ENCODE measurements at regions of chr3 and their contacts with region 1.

Region 1: DNA sequence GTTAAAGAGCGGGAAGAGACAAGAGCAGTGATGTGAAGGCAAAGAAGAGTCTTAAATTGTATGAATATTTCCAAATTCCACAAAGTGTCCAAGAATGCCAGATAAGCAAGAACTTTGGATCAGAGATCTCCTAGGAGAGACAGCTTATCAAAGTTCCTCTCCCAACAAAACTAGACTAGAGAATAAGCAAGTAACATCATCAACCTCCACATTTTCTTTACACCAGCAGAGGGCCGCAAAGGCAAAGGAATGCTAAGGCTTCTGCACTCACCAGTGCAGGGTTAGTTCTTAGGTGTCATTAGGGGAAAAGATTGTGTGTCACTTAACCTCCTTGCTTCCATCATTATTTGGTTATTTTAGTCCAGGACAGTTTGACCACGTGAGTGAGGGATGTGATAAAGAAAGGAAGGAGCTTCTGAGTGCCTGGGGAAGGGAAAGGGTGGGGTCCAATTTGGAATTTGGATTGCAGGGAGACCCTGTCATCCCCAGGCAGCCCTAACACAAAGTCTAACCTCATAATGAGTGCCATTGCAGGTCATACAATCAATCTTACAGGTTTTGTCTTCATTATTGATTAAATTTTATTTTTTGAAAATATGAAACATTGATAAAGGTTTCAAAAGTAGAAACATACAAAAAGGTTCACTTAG is 7.5 kb upstream of the CMTM6 start:
- DNase-seq: peak; percentile 65 to 79 (median 71)
- H3K4me3 ChIP-seq: no peak overlapping the region
- H3K4me3 Mint-ChIP-seq: no peak overlapping the region
- H3K27ac ChIP-seq: no peak overlapping the region
- H3K27ac Mint-ChIP-seq: peak overlapping the region in 2 of 7 donors; percentile 32 to 74
- H3K4me1 ChIP-seq: no peaks in the 10 kb centered on the region
- H3K4me1 Mint-ChIP-seq: peaks cover 9% of the 10 kb centered on the region
- H3K27me3 ChIP-seq: no peaks in the 10 kb centered on the region
- H3K27me3 Mint-ChIP-seq: peaks cover 0 to 2% (median 0%) of the 10 kb centered on the region in 3 donors
- CTCF ChIP-seq: peak; percentile 85

Region 2: DNA sequence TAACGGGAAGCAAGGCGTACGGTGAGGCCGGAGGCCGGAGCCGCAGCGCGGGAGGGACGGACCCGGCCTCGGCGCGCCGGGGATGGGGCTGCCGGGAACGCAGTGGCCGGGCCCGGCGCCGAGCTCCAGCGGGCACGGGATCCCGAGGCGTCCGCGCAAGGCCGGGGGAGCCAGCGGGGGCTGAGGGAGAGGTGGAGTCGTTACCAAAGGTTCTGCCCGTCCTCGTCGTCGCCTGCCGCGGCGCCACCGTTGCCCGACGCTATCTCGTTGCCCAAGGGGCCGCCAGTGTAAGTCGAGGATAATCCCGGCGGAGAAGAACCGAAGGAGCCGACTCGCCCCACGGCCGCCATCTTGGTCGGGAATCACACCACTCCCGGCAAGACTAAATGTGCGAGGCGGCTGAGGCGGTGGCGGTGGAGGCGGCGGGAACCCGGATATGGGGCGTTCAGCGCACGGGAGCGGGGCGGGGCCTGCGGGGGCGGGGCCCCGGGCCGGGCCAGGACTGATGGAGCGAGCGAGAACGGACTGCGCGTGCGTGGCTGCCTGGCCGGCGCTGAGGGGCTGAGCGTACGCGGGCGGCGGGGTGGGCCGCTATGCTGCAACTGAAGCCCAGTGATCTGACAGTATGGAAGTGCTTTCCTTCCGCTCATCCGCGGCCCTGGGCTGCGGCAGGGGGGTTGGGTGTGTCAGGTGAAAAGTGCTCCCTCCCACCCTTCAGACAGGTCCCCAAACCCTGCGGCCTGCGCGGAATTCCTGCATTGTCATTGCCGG is 60.4 kb after region 1 on chr3 and contains the start of gene DYNC1LI1:
- intact Hi-C with region 1: loop called (anchors 5 to 10 kb)
- DNase-seq: peak; percentile 81 to 90 (median 88)
- H3K4me3 ChIP-seq: peak within 1 kb of the TSS; percentile 81 to 92 (median 84)
- H3K4me3 Mint-ChIP-seq: peak within 1 kb of the TSS; percentile 92 to 93
- H3K27ac ChIP-seq: peak within 1 kb of the TSS; percentile 91 to 92
- H3K27ac Mint-ChIP-seq: peak within 1 kb of the TSS; percentile 87 to 96 (median 94)
- H3K4me1 ChIP-seq: peaks cover 58 to 62% of the 10 kb centered on the region in 2 donors
- H3K4me1 Mint-ChIP-seq: peaks cover 41% of the 10 kb centered on the region
- H3K27me3 ChIP-seq: no peaks in the 10 kb centered on the region
- H3K27me3 Mint-ChIP-seq: no peaks in the 10 kb centered on the region
- CTCF ChIP-seq: no peak
- polyA plus RNA-seq, gene DYNC1LI1: 23.5 to 50.1 (median 46.8) TPM

Region 3: DNA sequence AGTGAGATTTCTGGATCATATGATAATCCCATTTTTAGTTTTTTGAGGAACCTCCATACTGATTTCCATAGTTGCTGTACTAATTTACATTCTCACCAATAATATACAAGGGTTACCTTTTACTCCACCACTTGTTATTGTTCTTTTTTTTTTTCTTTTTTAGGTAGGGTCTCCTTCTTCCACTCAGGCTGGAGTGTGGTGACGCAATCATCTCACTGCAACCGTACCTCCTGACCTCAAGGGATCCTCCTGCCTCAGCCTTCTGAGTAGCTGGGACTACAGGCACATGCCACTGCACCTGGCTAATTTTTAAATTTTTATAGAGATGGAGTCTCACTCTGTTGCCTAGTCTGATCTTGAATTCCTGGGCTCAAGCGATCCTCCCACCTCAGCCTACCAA is 150.4 kb after region 1 on chr3:
- intact Hi-C with region 1: loop called (anchors 2 kb)
- DNase-seq: no peak
- H3K4me3 ChIP-seq: no peak overlapping the region
- H3K4me3 Mint-ChIP-seq: no peak overlapping the region
- H3K27ac ChIP-seq: no peak overlapping the region
- H3K27ac Mint-ChIP-seq: peak overlapping the region in 1 of 7 donors; percentile 41
- H3K4me1 ChIP-seq: no peaks in the 10 kb centered on the region
- H3K4me1 Mint-ChIP-seq: no peaks in the 10 kb centered on the region
- H3K27me3 ChIP-seq: no peaks in the 10 kb centered on the region
- H3K27me3 Mint-ChIP-seq: peaks cover 0 to 10% (median 1%) of the 10 kb centered on the region in 3 donors
- CTCF ChIP-seq: no peak

Region 4: GRCh38 chr3:32667122-32667521 is 156.9 kb after region 1 on chr3:
- intact Hi-C with region 1: loop called in 1 of 2 experiments (anchors 2 kb)
- DNase-seq: no peak
- H3K4me3 ChIP-seq: no peak overlapping the region
- H3K4me3 Mint-ChIP-seq: no peak overlapping the region
- H3K27ac ChIP-seq: no peak overlapping the region
- H3K27ac Mint-ChIP-seq: no peak overlapping the region
- H3K4me1 ChIP-seq: no peaks in the 10 kb centered on the region
- H3K4me1 Mint-ChIP-seq: no peaks in the 10 kb centered on the region
- H3K27me3 ChIP-seq: no peaks in the 10 kb centered on the region
- H3K27me3 Mint-ChIP-seq: peaks cover 0 to 4% (median 0%) of the 10 kb centered on the region in 3 donors
- CTCF ChIP-seq: no peak

Measured in CD14-positive monocyte (primary cell).